Ovary (tissue), 10 donors: ENCODE measurements at regions of chr1 and their contacts with region 1.

Region 1: DNA sequence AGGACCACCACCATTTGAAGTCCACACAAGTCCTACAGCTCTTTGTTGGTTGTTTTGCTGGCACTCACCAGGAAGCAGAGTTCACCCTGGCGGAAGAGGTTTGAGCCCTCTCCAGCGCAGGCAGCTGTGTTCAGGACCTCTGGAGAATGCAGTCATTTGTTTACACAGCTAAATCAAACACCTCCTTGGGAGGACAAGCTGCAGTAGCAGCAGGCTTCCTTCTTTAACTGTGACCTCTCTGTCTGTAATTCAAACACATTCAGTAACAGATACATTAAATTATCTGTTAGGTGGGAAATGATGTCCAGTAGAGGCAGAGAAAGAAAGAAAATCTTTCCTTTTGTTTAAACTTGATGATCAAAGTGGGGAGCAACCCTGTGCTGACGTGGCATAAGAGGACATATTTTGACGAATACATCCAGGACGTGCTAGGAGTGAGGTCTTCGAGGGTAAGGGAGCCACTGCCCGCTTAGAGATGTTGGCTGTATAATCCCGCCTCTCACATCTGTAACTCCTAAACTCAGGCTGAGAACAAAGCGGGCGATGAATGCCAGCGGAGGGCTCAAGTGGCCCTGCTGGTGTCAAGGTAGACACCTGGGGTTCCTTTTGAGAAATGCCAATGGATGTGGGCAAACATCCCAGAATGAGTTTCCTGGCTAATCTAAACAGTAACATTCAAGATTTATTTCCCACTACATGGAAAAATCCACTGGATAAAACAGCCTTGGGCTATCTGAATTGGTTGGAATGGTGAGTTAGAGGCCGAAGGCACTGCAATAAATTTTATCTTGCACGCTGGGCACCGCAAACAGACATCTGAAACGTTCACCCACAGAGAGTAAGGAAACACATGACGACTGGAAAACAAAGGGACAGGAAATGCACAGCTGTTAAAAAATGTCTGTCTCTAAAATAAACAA is 51.7 kb downstream of the ABCA4 start:
- DNase-seq: peak in 2 of 5 donors; percentile 46 to 55
- H3K4me3 ChIP-seq: no peak overlapping the region
- H3K27ac ChIP-seq: peak overlapping the region in 1 of 2 donors; percentile 28
- H3K4me1 ChIP-seq: peaks cover 7% of the 10 kb centered on the region
- H3K27me3 ChIP-seq: no peaks in the 10 kb centered on the region
- CTCF ChIP-seq: no peak
- EP300 ChIP-seq: no peak
- POLR2A ChIP-seq: no peak

Region 2: DNA sequence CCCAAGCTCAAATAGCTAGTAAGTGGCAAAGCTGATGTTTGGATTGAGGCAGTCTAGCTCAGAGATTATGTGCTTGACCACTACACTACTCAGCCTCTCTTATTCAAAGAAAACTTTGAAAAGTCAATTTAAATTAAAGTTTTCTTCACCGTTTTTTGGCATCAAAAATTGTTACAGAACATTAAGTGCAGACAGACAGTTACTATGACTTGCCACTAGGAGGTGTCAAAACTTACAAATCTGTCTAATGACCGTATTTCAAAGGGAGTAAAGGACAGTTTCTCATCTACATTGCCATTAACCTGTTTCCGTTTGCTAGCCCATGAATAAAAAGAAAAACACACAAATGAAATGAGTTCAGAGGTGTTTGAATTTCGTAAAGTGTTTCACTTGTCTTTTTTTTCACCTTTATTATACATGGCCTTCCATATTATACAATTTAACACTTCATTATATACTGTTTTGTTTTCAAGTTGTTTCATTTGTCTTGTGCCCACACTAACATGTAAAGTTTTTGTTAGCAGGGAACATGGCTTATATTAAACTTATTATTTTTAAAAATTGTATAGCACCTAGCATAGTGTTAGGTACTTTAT is 1047.6 kb before region 1 on chr1:
- intact Hi-C with region 1: no loop called
- DNase-seq: no peak
- H3K4me3 ChIP-seq: no peak overlapping the region
- H3K27ac ChIP-seq: no peak overlapping the region
- H3K4me1 ChIP-seq: no peaks in the 10 kb centered on the region
- H3K27me3 ChIP-seq: no peaks in the 10 kb centered on the region
- CTCF ChIP-seq: peak in 2 of 3 donors; percentile 18 to 19
- EP300 ChIP-seq: no peak
- POLR2A ChIP-seq: no peak

Region 3: DNA sequence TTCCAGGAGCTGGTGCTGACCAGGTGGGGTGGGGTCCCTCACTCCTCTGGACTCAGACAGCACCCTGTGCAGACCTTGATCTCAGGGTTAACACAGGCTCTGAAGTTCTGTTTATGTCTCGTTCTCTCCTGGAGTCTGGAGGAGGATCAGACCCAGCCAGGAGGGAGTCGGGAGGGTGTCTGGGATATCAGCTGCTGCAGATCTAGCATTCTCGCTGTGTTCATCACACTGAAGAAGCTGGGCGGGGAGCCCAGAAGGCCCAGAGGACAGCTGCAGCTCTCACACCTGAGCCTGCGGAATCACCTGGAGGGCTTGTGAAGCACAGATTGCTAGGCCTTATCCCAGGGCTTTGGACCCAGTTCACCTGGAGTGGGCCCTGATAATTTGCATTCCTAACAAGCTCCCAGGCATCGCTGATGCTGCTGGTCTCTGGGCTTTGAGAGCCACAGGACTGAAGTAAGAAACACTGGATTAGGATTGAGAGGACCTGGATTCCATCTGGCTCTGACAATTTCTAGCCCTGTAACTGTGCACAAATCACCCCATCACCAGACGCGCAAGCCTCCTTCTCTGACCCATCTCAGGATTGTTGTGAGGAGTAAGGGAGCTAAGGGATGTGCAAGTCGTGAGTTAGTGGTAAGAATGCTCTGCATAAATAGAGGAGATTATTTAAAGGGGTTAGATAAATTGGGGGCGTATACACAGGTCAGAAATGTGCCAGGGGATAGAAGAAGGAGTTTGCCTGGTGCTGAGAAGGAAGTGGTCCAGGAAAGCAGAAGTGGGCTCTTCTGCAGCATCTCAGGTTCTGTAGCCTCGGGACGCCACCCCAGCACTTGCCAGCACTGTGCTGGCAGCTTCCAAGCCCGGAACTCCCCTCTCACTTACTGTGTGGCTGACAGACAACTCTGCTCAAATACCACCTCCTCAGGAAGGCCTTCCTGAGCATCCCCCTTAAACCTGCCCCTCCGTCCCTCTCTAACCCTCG is 32.6 kb after region 1 on chr1:
- intact Hi-C with region 1: loop called in 2 of 4 experiments (anchors 5 kb)
- DNase-seq: peak in 2 of 5 donors; percentile 58 to 66
- H3K4me3 ChIP-seq: no peak overlapping the region
- H3K27ac ChIP-seq: peak overlapping the region in 1 of 2 donors; percentile 18
- H3K4me1 ChIP-seq: peaks cover 13% of the 10 kb centered on the region
- H3K27me3 ChIP-seq: no peaks in the 10 kb centered on the region
- CTCF ChIP-seq: no peak
- EP300 ChIP-seq: no peak
- POLR2A ChIP-seq: no peak